Activated CD8-positive, alpha-beta memory T cell treated with anti-CD3 and anti-CD28 coated beads, Interleukin-2, amount 10 ng/mL, durations not matched to agents 7 days and 5 days (primary cell): ENCODE measurements at regions of chr20 and their contacts with region 1.

Region 1: GRCh38 chr20:645318-646106 is 7.5 kb downstream of the SRXN1 start:
- DNase-seq: peak; percentile 76
- ATAC-seq: peak; percentile 88
- H3K4me3 Mint-ChIP-seq: no peak overlapping the region
- H3K27ac Mint-ChIP-seq: peak overlapping the region; percentile 26
- H3K4me1 Mint-ChIP-seq: peaks cover 11% of the 10 kb centered on the region
- H3K27me3 Mint-ChIP-seq: peaks cover 11% of the 10 kb centered on the region

Region 2: GRCh38 chr20:354298-355064 is 291.0 kb before region 1 on chr20:
- CTCF ChIA-PET with region 1: interaction called, 16 read pairs
- DNase-seq: peak; percentile 85
- ATAC-seq: peak; percentile 99
- H3K4me3 Mint-ChIP-seq: no peak overlapping the region
- H3K27ac Mint-ChIP-seq: no peak overlapping the region
- H3K4me1 Mint-ChIP-seq: peaks cover 10% of the 10 kb centered on the region
- H3K27me3 Mint-ChIP-seq: peaks cover 9% of the 10 kb centered on the region

Region 3: GRCh38 chr20:543369-544152 is 102.0 kb before region 1 on chr20 and contains the start of gene CSNK2A1:
- CTCF ChIA-PET with region 1: interaction called, 14 read pairs
- DNase-seq: peak; percentile 97
- ATAC-seq: peak; percentile 99
- H3K4me3 Mint-ChIP-seq: peak within 1 kb of the TSS; percentile 84
- H3K27ac Mint-ChIP-seq: peak within 1 kb of the TSS; percentile 94
- H3K4me1 Mint-ChIP-seq: peaks cover 42% of the 10 kb centered on the region
- H3K27me3 Mint-ChIP-seq: peaks cover 4% of the 10 kb centered on the region
- total RNA-seq, gene CSNK2A1: 111 to 124 TPM

Region 4: GRCh38 chr20:561437-562231 is 83.9 kb before region 1 on chr20:
- CTCF ChIA-PET with region 1: interaction called, 55 read pairs
- DNase-seq: peak; percentile 73
- ATAC-seq: peak; percentile 72
- H3K4me3 Mint-ChIP-seq: no peak overlapping the region
- H3K27ac Mint-ChIP-seq: no peak overlapping the region
- H3K4me1 Mint-ChIP-seq: no peaks in the 10 kb centered on the region
- H3K27me3 Mint-ChIP-seq: peaks cover 16% of the 10 kb centered on the region

Region 5: GRCh38 chr20:625360-625932 is 20.1 kb before region 1 on chr20:
- CTCF ChIA-PET with region 1: interaction called, 10 read pairs
- DNase-seq: no peak
- ATAC-seq: no peak
- H3K4me3 Mint-ChIP-seq: no peak overlapping the region
- H3K27ac Mint-ChIP-seq: no peak overlapping the region
- H3K4me1 Mint-ChIP-seq: no peaks in the 10 kb centered on the region
- H3K27me3 Mint-ChIP-seq: peaks cover 30% of the 10 kb centered on the region

Region 6: DNA sequence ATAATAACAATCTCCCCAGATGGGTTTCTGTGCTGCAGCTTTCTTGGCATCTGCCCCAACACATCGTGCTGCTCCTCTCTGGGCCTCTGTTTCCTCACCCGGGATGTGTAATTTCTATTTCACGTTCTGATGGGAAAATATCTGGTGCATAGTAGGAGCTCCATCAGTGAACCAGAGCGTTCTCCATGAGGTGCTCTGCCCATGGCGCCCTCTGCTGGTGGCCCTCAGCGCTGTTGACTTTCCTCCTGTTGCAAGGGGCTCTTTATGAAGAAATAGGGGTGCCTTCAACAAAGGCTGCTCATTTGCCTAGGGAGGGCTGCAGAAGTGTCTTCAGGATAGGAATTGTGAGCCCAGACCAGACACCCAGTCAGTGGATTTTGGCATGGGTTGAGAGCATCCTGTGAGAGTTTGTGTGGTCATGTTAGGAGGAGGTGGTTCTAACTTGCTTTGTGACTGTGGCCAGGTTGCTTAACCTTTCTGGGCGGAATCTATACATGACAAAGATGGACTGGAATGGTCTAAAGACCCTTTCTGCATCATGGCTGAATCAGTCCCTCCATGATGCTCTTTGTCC is 22.0 kb after region 1 on chr20:
- CTCF ChIA-PET with region 1: interaction called, 12 read pairs
- DNase-seq: peak; percentile 74
- ATAC-seq: peak; percentile 45
- H3K4me3 Mint-ChIP-seq: no peak overlapping the region
- H3K27ac Mint-ChIP-seq: no peak overlapping the region
- H3K4me1 Mint-ChIP-seq: peaks cover 9% of the 10 kb centered on the region
- H3K27me3 Mint-ChIP-seq: peaks cover 54% of the 10 kb centered on the region